H1 (cell line): ENCODE measurements at regions of chr14 and their contacts with region 1.

Region 1: GRCh38 chr14:80587075-80587724 is 354.3 kb downstream of the CEP128 start:
- DNase-seq: no peak
- H3K4me3 ChIP-seq: no peak overlapping the region
- H3K27ac ChIP-seq: no peak overlapping the region
- H3K4me1 ChIP-seq: no peaks in the 10 kb centered on the region; a peak in 1 of 7 replicates
- H3K27me3 ChIP-seq: no peaks in the 10 kb centered on the region
- CTCF ChIP-seq: peak in 2 of 3 experiments; percentile 17 to 51; a peak in 2 of 4 replicates
- EP300 ChIP-seq: no peak
- POLR2A ChIP-seq: no peak
- RAD21 ChIP-seq: peak; percentile 47 to 48

Region 2: DNA sequence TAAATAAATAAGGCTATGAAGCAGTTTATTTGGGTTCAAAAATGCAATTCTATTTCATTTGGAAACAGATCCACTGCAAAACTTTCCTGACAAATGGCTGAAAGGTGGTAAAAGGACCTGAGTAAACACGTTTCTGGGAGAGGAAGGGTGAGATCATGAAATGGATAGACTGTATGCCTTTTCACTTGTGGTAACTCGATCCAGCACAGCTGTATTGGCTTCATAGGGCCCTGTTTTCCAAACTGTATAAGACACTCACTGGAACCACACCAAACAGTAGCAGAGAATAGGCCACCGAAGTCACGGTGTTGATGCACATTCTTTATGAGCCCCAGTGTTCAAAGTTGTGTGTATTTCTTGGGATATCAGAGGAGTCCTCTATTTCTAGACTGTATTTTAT is 50.7 kb before region 1 on chr14:
- CTCF ChIA-PET with region 1: no interaction called
- POLR2A ChIA-PET with region 1: no interaction called
- DNase-seq: no peak
- H3K4me3 ChIP-seq: no peak overlapping the region
- H3K27ac ChIP-seq: no peak overlapping the region
- H3K4me1 ChIP-seq: no peaks in the 10 kb centered on the region
- H3K27me3 ChIP-seq: no peaks in the 10 kb centered on the region
- CTCF ChIP-seq: no peak
- EP300 ChIP-seq: no peak
- POLR2A ChIP-seq: no peak
- RAD21 ChIP-seq: no peak

Region 3: GRCh38 chr14:80572666-80573065 is 14.5 kb before region 1 on chr14:
- CTCF ChIA-PET with region 1: interaction called, 17 read pairs
- POLR2A ChIA-PET with region 1: no interaction called
- DNase-seq: no peak
- H3K4me3 ChIP-seq: no peak overlapping the region
- H3K27ac ChIP-seq: no peak overlapping the region
- H3K4me1 ChIP-seq: peaks cover 0 to 4% (median 0%) of the 10 kb centered on the region in 4 experiments; a peak in 1 of 7 replicates
- H3K27me3 ChIP-seq: no peaks in the 10 kb centered on the region
- CTCF ChIP-seq: no peak
- EP300 ChIP-seq: no peak
- POLR2A ChIP-seq: no peak
- RAD21 ChIP-seq: no peak

Region 4: DNA sequence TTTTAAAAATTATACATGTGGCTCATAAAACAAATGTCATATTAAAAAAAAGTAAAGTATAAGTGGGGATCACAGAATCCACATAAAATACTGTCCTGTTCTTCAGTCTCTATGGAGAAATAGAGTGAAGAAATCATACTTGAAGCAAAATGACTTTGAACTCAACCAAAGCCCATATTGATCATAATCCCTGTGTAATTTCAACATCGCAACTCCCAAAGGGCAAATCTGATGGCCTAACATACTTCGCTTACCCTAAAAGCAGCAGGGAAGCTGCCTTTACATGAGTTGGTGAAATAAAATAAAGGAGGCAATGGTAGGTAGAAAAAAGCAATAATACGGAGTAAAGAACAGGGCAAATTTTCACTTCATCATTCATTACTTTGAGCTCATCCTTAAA is 252.5 kb after region 1 on chr14:
- CTCF ChIA-PET with region 1: no interaction called
- POLR2A ChIA-PET with region 1: no interaction called
- DNase-seq: no peak
- H3K4me3 ChIP-seq: no peak overlapping the region
- H3K27ac ChIP-seq: no peak overlapping the region
- H3K4me1 ChIP-seq: no peaks in the 10 kb centered on the region
- H3K27me3 ChIP-seq: no peaks in the 10 kb centered on the region
- CTCF ChIP-seq: no peak
- EP300 ChIP-seq: no peak
- POLR2A ChIP-seq: no peak
- RAD21 ChIP-seq: no peak